ENCODE measurements at regions of chr17 and their contacts with region 1.

Region 1: DNA sequence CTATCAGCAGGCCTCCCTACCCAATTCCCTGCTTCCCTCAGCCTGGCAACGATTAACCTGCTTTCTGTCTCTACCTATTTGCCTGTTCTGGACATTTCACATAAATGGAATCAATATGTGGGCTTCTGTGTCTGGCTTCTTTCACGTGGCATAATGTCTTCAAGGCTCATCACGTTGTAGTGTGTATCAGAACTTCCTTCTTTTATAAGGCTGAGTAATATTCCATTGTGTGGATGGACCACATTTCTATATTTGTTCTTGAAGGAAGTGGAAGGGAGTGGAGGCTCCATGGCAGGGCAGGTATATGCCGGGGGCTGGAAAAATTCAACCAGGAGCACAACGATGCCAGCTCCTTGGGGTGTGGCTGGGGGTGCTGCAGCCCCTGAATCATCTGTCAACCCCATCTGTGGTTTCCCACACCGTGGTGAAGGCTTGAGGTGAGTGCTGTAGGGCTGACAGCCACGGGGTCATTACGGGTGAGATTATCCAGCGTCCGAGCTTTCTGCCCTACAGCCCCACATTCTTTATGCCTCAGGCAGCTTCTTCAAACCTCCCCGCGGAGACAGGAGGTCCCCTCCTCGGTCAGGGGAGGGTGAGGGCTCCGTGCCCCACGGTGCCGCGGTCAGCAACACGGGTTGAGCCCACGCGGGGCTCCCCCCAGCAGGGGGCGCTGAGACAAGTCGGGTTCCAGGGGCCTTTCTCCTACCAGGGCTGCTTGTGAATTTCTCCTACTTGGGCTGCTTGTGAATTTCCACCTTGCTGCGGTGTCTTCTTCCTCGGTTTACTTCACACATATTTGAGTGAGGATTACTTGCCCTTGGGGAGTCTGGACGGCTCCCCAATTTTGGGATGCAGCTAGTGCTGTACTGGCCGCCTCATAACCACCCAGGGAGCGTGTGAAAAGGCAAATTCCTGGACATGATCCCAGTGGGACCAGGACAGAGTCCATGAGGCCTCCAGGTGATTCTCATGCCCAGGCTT is 18.3 kb upstream of the WFIKKN2 start:
- DNase-seq: peak in 8 of 9 donors; percentile 32 to 67 (median 50)
- ATAC-seq: peak; percentile 88
- H3K4me3 ChIP-seq: no peak overlapping the region
- H3K4me3 Mint-ChIP-seq: peak overlapping the region in 3 of 10 donors; percentile 26 to 38 (median 32)
- H3K27ac ChIP-seq: no peak overlapping the region
- H3K27ac Mint-ChIP-seq: no peak overlapping the region
- H3K4me1 ChIP-seq: no peaks in the 10 kb centered on the region
- H3K4me1 Mint-ChIP-seq: peaks cover 0 to 9% (median 3%) of the 10 kb centered on the region in 7 donors
- H3K27me3 ChIP-seq: no peaks in the 10 kb centered on the region
- H3K27me3 Mint-ChIP-seq: peaks cover 6 to 33% (median 13%) of the 10 kb centered on the region in 5 donors

Region 2: GRCh38 chr17:49815761-49816281 is 1001.2 kb before region 1 on chr17:
- CTCF ChIA-PET with region 1: no interaction called
- POLR2A ChIA-PET with region 1: no interaction called
- intact Hi-C with region 1: no loop called
- DNase-seq: no peak
- ATAC-seq: no peak
- H3K4me3 ChIP-seq: no peak overlapping the region
- H3K4me3 Mint-ChIP-seq: peak overlapping the region in 5 of 10 donors; percentile 43 to 85 (median 67)
- H3K27ac ChIP-seq: peak overlapping the region; percentile 55
- H3K27ac Mint-ChIP-seq: peak overlapping the region; percentile 78 to 99 (median 96)
- H3K4me1 ChIP-seq: peaks cover 36 to 60% of the 10 kb centered on the region in 2 donors
- H3K4me1 Mint-ChIP-seq: peaks cover 32 to 79% (median 73%) of the 10 kb centered on the region in 7 donors
- H3K27me3 ChIP-seq: no peaks in the 10 kb centered on the region
- H3K27me3 Mint-ChIP-seq: no peaks in the 10 kb centered on the region

Region 3: GRCh38 chr17:50768348-50768778 is 48.7 kb before region 1 on chr17:
- CTCF ChIA-PET with region 1: no interaction called
- POLR2A ChIA-PET with region 1: no interaction called
- intact Hi-C with region 1: no loop called
- DNase-seq: no peak
- ATAC-seq: no peak
- H3K4me3 ChIP-seq: no peak overlapping the region
- H3K4me3 Mint-ChIP-seq: no peak overlapping the region
- H3K27ac ChIP-seq: no peak overlapping the region
- H3K27ac Mint-ChIP-seq: no peak overlapping the region
- H3K4me1 ChIP-seq: peaks cover 0 to 8% of the 10 kb centered on the region in 2 donors
- H3K4me1 Mint-ChIP-seq: peaks cover 4 to 18% (median 11%) of the 10 kb centered on the region in 7 donors
- H3K27me3 ChIP-seq: no peaks in the 10 kb centered on the region
- H3K27me3 Mint-ChIP-seq: peaks cover 0 to 28% (median 0%) of the 10 kb centered on the region in 5 donors

Region 4: GRCh38 chr17:50956750-50957523 is 139.9 kb after region 1 on chr17:
- CTCF ChIA-PET with region 1: interaction called, 9 read pairs
- POLR2A ChIA-PET with region 1: no interaction called
- intact Hi-C with region 1: loop called in 1 of 2 experiments (anchors 1 kb)
- DNase-seq: peak; percentile 39 to 72 (median 58)
- ATAC-seq: peak; percentile 92
- H3K4me3 ChIP-seq: no peak overlapping the region
- H3K4me3 Mint-ChIP-seq: peak overlapping the region in 1 of 10 donors; percentile 68
- H3K27ac ChIP-seq: no peak overlapping the region
- H3K27ac Mint-ChIP-seq: peak overlapping the region in 4 of 9 donors; percentile 17 to 62 (median 50)
- H3K4me1 ChIP-seq: peaks cover 0 to 7% of the 10 kb centered on the region in 2 donors
- H3K4me1 Mint-ChIP-seq: peaks cover 0 to 8% (median 4%) of the 10 kb centered on the region in 7 donors
- H3K27me3 ChIP-seq: no peaks in the 10 kb centered on the region
- H3K27me3 Mint-ChIP-seq: no peaks in the 10 kb centered on the region

Region 5: GRCh38 chr17:51653878-51654277 is 836.8 kb after region 1 on chr17:
- CTCF ChIA-PET with region 1: no interaction called
- POLR2A ChIA-PET with region 1: no interaction called
- intact Hi-C with region 1: no loop called
- DNase-seq: no peak
- ATAC-seq: no peak
- H3K4me3 ChIP-seq: no peak overlapping the region
- H3K4me3 Mint-ChIP-seq: no peak overlapping the region
- H3K27ac ChIP-seq: no peak overlapping the region
- H3K27ac Mint-ChIP-seq: no peak overlapping the region
- H3K4me1 ChIP-seq: no peaks in the 10 kb centered on the region
- H3K4me1 Mint-ChIP-seq: peaks cover 0 to 8% (median 0%) of the 10 kb centered on the region in 7 donors
- H3K27me3 ChIP-seq: no peaks in the 10 kb centered on the region
- H3K27me3 Mint-ChIP-seq: peaks cover 0 to 31% (median 5%) of the 10 kb centered on the region in 5 donors

Measured in naive thymus-derived CD4-positive, alpha-beta T cell (primary cell).